Mammary epithelial cell (primary cell): ENCODE measurements at regions of chr3 and their contacts with region 1.

Region 1: DNA sequence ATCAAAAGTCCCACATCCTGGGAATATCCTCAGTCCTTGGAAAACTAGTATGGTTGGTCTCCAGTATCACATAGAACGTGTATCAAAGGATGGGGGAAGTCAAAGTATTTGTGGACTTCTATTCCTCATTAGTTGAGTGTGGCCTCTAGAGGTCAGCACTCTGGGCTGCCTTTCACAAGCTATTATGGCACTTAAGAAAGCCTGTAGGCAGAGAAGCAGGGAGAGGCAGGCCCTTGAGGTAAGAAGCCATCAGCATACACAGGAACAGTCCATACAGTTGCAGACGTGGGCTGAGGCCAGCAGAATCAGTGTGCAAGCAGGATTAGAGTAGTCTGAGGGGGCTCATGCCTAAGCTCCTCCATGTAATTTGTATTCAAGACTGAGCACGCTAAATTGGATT is 341.7 kb downstream of the CLSTN2 start:
- DNase-seq: peak; percentile 20
- H3K4me3 ChIP-seq: no peak overlapping the region
- H3K27ac ChIP-seq: no peak overlapping the region
- H3K4me1 ChIP-seq: peaks cover 9% of the 10 kb centered on the region
- H3K27me3 ChIP-seq: peaks cover 6% of the 10 kb centered on the region
- CTCF ChIP-seq: peak; percentile 43 to 60

Region 2: DNA sequence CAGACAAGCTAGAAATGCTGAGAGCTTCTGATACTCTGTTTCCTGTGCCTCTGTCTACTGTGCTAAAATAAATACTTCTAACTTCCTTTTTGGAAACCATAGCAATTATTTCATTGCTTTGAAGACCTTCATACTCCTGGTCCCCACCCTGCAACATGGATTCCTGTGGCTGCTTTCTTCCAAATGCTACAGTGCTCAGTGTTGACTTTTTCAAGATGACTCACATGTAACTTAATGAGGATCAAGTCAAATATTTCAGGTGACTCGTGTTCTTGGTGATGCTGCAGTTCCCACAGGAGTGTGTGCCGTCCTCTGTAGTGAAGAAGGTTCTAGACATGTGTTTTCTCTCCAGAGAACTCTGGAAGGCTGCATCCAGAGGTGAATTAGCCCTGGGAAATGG is 53.1 kb before region 1 on chr3:
- CTCF ChIA-PET with region 1: no interaction called
- dilution Hi-C with region 1: loop called (anchors 5 kb)
- in situ Hi-C with region 1: no loop called
- intact Hi-C with region 1: loop called (anchors 1 kb)
- DNase-seq: peak; percentile 77
- H3K4me3 ChIP-seq: no peak overlapping the region
- H3K27ac ChIP-seq: no peak overlapping the region
- H3K4me1 ChIP-seq: peaks cover 15% of the 10 kb centered on the region
- H3K27me3 ChIP-seq: peaks cover 5% of the 10 kb centered on the region
- CTCF ChIP-seq: no peak

Region 3: DNA sequence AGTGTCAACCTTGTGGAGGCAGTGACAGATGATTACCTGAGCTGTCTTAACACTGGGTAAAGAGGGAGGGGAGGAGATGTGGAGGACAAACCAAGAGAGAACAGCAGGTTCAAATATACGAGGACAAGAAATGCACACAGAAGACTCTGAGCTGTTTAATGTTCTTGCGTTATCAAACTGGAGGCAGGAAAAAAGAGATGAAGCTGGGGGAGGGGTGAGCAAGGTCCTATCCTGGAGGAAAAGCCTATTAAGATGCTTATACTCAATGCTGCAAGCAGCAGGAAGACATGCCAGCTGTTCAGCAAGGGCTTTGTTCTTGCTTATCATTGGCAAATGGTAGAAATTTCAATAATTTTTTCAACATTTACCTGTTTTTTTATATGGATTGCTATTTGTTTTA is 55.4 kb after region 1 on chr3:
- CTCF ChIA-PET with region 1: no interaction called
- dilution Hi-C with region 1: loop called (anchors 10 kb)
- in situ Hi-C with region 1: no loop called
- intact Hi-C with region 1: no loop called
- DNase-seq: no peak
- H3K4me3 ChIP-seq: no peak overlapping the region
- H3K27ac ChIP-seq: no peak overlapping the region
- H3K4me1 ChIP-seq: no peaks in the 10 kb centered on the region
- H3K27me3 ChIP-seq: peaks cover 3% of the 10 kb centered on the region
- CTCF ChIP-seq: no peak